Activated CD4-positive, alpha-beta memory T cell treated with anti-CD3 and anti-CD28 coated beads, Interleukin-2, amount 10 ng/mL, durations not matched to agents 7 days and 5 days (primary cell): ENCODE measurements at regions of chr19 and their contacts with region 1.

Region 1: DNA sequence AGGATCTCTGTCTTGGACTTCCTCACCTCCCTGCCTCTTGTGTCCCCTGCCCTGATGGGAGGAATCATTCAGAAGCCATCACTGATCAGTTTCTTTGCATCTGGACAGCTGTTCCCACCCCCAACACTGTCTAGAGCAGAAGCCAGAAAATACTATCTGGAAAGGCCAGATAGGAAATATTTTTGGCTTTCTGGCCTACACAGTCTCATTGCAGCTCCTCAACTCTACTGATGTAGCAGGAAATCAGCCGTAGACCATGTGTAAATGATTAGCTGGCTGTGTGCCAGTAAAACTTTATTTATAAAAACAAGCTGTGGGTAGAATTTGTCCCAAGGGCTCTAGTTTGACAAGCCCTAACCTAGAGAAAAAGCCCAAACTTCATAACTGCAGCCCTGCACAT is 5.6 kb downstream of the SIGLEC7 start:
- DNase-seq: no peak
- H3K4me3 Mint-ChIP-seq: no peak overlapping the region
- H3K27ac Mint-ChIP-seq: no peak overlapping the region
- H3K4me1 Mint-ChIP-seq: no peaks in the 10 kb centered on the region
- H3K27me3 Mint-ChIP-seq: peaks cover 42% of the 10 kb centered on the region

Region 2: GRCh38 chr19:51158474-51159129 is 10.9 kb after region 1 on chr19:
- CTCF ChIA-PET with region 1: interaction called, 17 read pairs
- POLR2A ChIA-PET with region 1: no interaction called
- DNase-seq: peak; percentile 88
- H3K4me3 Mint-ChIP-seq: no peak overlapping the region
- H3K27ac Mint-ChIP-seq: peak overlapping the region; percentile 56
- H3K4me1 Mint-ChIP-seq: peaks cover 38% of the 10 kb centered on the region
- H3K27me3 Mint-ChIP-seq: peaks cover 20% of the 10 kb centered on the region